Activated CD8-positive, alpha-beta memory T cell treated with anti-CD3 and anti-CD28 coated beads, Interleukin-2, amount 10 ng/mL, durations not matched to agents 7 days and 5 days (primary cell): ENCODE measurements at regions of chrX and their contacts with region 1.

Region 1: GRCh38 chrX:153947009-153947769 is 2.7 kb upstream of the RENBP start:
- DNase-seq: peak; percentile 87
- ATAC-seq: peak; percentile 84
- H3K4me3 Mint-ChIP-seq: no peak overlapping the region
- H3K27ac Mint-ChIP-seq: peak overlapping the region; percentile 72
- H3K4me1 Mint-ChIP-seq: peaks cover 35% of the 10 kb centered on the region
- H3K27me3 Mint-ChIP-seq: no peaks in the 10 kb centered on the region

Region 2: GRCh38 chrX:153763989-153764755 is 183.0 kb before region 1 on chrX and contains the start of gene PLXNB3:
- CTCF ChIA-PET with region 1: interaction called, 10 read pairs
- DNase-seq: peak; percentile 77
- ATAC-seq: peak; percentile 91
- H3K4me3 Mint-ChIP-seq: no peak within 1 kb of the TSS
- H3K27ac Mint-ChIP-seq: no peak within 1 kb of the TSS
- H3K4me1 Mint-ChIP-seq: peaks cover 5% of the 10 kb centered on the region
- H3K27me3 Mint-ChIP-seq: no peaks in the 10 kb centered on the region
- total RNA-seq, gene PLXNB3: 0.42 to 0.50 TPM

Region 3: GRCh38 chrX:153927922-153928760 is 19.0 kb before region 1 on chrX:
- CTCF ChIA-PET with region 1: interaction called, 190 read pairs
- DNase-seq: peak; percentile 96
- ATAC-seq: peak; percentile 82
- H3K4me3 Mint-ChIP-seq: peak overlapping the region; percentile 85
- H3K27ac Mint-ChIP-seq: peak overlapping the region; percentile 97
- H3K4me1 Mint-ChIP-seq: peaks cover 32% of the 10 kb centered on the region
- H3K27me3 Mint-ChIP-seq: no peaks in the 10 kb centered on the region

Region 4: GRCh38 chrX:153934473-153935325 is 12.5 kb before region 1 on chrX and contains the start of gene NAA10:
- CTCF ChIA-PET with region 1: interaction called, 190 read pairs
- DNase-seq: peak; percentile 69
- ATAC-seq: peak; percentile 96
- H3K4me3 Mint-ChIP-seq: peak within 1 kb of the TSS; percentile 84
- H3K27ac Mint-ChIP-seq: peak within 1 kb of the TSS; percentile 77
- H3K4me1 Mint-ChIP-seq: peaks cover 34% of the 10 kb centered on the region
- H3K27me3 Mint-ChIP-seq: no peaks in the 10 kb centered on the region
- total RNA-seq, gene NAA10: 92.8 to 115 TPM

Region 5: DNA sequence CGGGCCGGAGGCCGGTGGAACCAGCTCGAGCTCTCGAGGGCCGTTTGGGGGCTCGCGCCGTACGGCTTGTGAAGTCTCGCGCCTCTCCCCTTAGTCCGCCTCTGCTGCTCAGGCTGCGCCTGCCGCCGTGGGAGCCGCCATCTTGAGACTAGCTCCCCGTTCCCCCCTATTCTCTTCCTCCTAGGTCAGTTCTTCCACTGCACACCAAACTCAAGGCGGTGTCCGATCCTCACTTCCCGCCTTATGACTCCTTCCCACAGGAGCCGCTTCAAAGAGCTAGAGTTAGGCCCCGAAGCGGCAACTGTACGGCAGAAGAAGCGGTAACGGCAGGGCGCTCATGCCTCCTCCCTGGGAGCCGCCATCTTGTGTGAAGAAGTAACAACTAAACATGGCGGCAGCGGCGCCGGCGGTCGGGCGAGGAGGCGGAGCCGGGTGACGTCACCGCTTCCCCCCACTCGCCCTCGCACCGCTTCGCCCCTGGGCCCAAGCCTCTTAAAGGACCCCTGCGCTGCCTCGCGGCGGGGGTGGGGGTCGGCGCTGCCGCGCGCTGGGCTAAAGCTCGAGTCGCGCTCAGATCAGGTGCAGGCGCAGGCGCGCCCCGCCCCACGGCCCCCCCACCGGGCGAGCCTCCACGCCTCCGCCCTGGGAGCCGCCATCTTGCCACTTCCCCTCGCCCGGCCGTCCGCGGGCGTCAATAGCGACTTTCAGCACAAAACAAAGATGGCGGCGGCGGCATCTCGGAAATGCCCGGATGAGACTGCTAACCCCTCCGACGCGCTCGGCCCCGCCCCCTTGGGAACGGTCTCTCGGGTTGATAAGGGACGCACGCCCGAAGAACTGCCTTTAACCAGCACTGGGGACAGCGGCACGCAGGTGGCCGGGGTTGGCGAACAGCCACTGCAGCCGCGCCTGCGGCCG is 24.5 kb after region 1 on chrX and contains the start of gene HCFC1:
- CTCF ChIA-PET with region 1: interaction called, 52 read pairs
- DNase-seq: peak; percentile 94
- ATAC-seq: peak; percentile 41
- H3K4me3 Mint-ChIP-seq: peak within 1 kb of the TSS; percentile 95
- H3K27ac Mint-ChIP-seq: peak within 1 kb of the TSS; percentile 100
- H3K4me1 Mint-ChIP-seq: peaks cover 30% of the 10 kb centered on the region
- H3K27me3 Mint-ChIP-seq: no peaks in the 10 kb centered on the region
- total RNA-seq, gene HCFC1: 136 to 138 TPM

Region 6: GRCh38 chrX:153981771-153982533 is 34.8 kb after region 1 on chrX:
- CTCF ChIA-PET with region 1: no interaction called
- DNase-seq: peak; percentile 82
- ATAC-seq: peak; percentile 43
- H3K4me3 Mint-ChIP-seq: peak overlapping the region; percentile 55
- H3K27ac Mint-ChIP-seq: peak overlapping the region; percentile 97
- H3K4me1 Mint-ChIP-seq: peaks cover 55% of the 10 kb centered on the region
- H3K27me3 Mint-ChIP-seq: no peaks in the 10 kb centered on the region

Region 7: DNA sequence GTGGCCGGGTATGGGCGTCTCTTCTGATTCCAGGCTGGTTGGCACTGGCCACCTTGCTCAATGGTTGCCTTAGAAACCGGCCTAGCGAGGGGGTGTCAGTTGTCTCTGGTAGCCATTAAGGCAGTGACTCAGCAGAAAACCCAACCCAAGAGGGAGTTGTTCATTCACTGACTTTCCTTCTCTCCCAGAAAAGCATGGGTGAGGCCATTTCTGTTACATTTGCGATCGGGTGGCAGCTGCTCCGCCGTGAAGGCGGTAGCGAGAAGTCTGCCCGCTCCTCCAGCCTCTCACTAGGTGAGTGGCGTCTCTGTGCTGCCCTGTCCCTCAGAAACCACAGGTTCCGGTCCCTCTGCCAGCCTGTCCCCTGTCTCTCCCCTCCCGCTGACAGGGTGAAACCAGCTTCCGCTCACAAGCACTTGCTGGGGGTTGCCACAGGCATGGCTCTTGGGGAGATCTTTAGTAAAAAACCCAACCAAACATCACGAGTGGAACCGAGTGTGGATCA is 55.1 kb after region 1 on chrX:
- CTCF ChIA-PET with region 1: no interaction called
- DNase-seq: peak; percentile 76
- ATAC-seq: peak; percentile 88
- H3K4me3 Mint-ChIP-seq: peak overlapping the region; percentile 54
- H3K27ac Mint-ChIP-seq: peak overlapping the region; percentile 88
- H3K4me1 Mint-ChIP-seq: peaks cover 16% of the 10 kb centered on the region
- H3K27me3 Mint-ChIP-seq: no peaks in the 10 kb centered on the region